ENCODE measurements at regions of chr9 and their contacts with region 1.

Region 1: DNA sequence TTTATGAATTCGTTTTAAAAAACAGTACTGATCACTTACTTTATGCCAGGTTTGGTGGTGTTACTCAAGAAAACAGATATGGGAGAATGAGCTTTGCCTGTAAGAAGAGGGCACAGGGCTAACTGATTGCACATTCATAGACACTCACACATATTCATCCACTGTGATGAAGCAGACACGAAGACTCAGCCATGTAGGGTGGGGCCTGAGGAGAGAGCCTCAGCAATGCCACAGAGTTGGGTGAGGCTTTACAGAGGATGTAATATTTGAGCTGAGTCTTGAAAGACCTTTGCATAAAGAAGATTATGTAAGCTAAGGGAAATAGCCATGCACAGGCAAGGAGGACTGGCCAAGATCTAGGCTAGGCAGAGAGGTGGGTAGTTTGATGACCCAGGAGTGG is 472.8 kb downstream of the PSAT1 start:
- DNase-seq: no peak
- H3K4me3 ChIP-seq: no peak overlapping the region
- CTCF ChIP-seq: no peak

Region 2: DNA sequence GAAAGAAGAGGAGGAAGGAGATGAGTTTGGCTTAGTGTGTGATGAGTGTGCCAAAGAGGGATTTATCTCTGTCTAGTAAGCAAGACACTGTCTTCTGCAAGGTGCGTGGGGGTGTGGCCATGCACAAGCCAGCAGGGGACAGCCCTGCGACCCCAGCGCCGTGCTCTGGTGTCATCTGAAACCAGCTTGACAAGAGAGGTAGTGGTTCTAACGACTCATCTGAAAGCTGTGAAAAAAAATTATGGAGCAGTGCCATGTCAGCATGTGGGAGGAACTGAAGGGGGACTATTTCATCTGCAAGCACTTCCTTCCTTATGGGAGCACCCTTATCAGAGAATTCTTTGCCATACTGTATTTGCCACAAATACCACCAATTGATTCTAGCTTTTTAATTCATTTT is 74.2 kb before region 1 on chr9:
- in situ Hi-C with region 1: no loop called
- DNase-seq: no peak
- H3K4me3 ChIP-seq: no peak overlapping the region
- CTCF ChIP-seq: no peak

Region 3: GRCh38 chr9:78713614-78714405 is 55.9 kb before region 1 on chr9:
- in situ Hi-C with region 1: loop called (anchors 5 kb)
- DNase-seq: peak; percentile 74
- H3K4me3 ChIP-seq: no peak overlapping the region
- CTCF ChIP-seq: no peak

Region 4: GRCh38 chr9:78811622-78812276 is 42.1 kb after region 1 on chr9:
- in situ Hi-C with region 1: no loop called
- DNase-seq: no peak
- H3K4me3 ChIP-seq: no peak overlapping the region
- CTCF ChIP-seq: no peak

Region 5: GRCh38 chr9:78879426-78880100 is 109.9 kb after region 1 on chr9:
- in situ Hi-C with region 1: no loop called
- DNase-seq: no peak
- H3K4me3 ChIP-seq: no peak overlapping the region
- CTCF ChIP-seq: no peak

Measured in astrocyte of the cerebellum (primary cell).